SK-N-SH (cell line): ENCODE measurements at regions of chr2 and their contacts with region 1.

Region 1: GRCh38 chr2:131673392-131674173 is 145.9 kb downstream of the CCDC74A start:
- DNase-seq: peak; percentile 78
- H3K4me3 ChIP-seq: peak overlapping the region; percentile 45 to 68
- H3K27ac ChIP-seq: no peak overlapping the region
- H3K4me1 ChIP-seq: peaks cover 0 to 9% of the 10 kb centered on the region in 2 experiments; a peak in 1 of 4 replicates
- H3K27me3 ChIP-seq: no peaks in the 10 kb centered on the region
- CTCF ChIP-seq: peak; percentile 79
- EP300 ChIP-seq: no peak
- RAD21 ChIP-seq: peak; percentile 76

Region 2: GRCh38 chr2:131154071-131154531 is 519.5 kb before region 1 on chr2:
- CTCF ChIA-PET with region 1: interaction called, 30 read pairs
- POLR2A ChIA-PET with region 1: no interaction called
- DNase-seq: peak; percentile 92
- H3K4me3 ChIP-seq: no peak overlapping the region; a peak in 1 of 4 replicates
- H3K27ac ChIP-seq: no peak overlapping the region
- H3K4me1 ChIP-seq: no peaks in the 10 kb centered on the region; a peak in 1 of 4 replicates
- H3K27me3 ChIP-seq: no peaks in the 10 kb centered on the region
- CTCF ChIP-seq: peak; percentile 87
- EP300 ChIP-seq: no peak
- RAD21 ChIP-seq: peak; percentile 97

Region 3: DNA sequence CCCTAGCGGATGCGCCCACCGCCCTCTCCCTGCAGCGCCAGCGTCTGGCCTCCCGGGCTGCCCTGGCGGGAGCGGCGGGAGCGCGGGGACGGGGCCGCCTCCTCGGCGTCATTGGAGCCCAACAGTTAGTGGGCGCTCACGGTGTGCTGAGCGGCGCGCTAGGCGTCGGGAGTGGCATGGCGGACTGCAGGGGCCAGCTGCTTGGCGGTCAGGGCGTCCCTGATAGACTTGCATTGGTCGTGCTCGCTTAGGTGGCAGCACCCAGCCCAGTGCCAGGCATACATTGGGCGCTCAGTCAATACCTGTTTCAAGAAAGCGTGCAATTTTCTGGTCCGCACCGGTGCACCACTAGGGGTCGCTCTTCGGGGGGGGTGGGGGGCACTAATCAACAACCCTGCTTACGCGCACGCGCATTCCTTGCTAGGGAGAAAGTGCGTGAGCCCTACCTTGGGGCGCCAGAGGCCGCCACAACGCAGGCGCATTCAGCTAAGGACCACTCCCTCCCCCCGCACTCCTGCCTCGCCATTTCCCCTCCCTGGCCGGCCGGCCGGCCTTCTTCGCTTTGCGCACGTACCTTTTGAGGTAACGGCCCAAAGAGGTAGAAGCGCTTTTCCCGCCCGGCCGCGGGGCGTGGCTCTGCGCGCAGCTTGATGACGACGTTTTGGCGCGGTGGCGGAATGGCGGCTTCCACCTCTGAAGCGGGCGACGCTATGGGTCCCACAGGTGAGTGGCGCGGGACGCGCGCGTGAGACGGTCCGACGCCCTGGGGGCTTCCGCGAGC is 181.0 kb before region 1 on chr2:
- CTCF ChIA-PET with region 1: interaction called, 36 read pairs
- POLR2A ChIA-PET with region 1: no interaction called
- DNase-seq: peak; percentile 100
- H3K4me3 ChIP-seq: peak overlapping the region; percentile 83 to 91
- H3K27ac ChIP-seq: peak overlapping the region; percentile 74 to 91
- H3K4me1 ChIP-seq: peaks cover 6 to 15% of the 10 kb centered on the region in 2 experiments; a peak in 2 of 4 replicates
- H3K27me3 ChIP-seq: no peaks in the 10 kb centered on the region
- CTCF ChIP-seq: peak; percentile 95
- EP300 ChIP-seq: no peak
- RAD21 ChIP-seq: peak; percentile 11; the same call in 1 of the 2 replicates

Region 4: DNA sequence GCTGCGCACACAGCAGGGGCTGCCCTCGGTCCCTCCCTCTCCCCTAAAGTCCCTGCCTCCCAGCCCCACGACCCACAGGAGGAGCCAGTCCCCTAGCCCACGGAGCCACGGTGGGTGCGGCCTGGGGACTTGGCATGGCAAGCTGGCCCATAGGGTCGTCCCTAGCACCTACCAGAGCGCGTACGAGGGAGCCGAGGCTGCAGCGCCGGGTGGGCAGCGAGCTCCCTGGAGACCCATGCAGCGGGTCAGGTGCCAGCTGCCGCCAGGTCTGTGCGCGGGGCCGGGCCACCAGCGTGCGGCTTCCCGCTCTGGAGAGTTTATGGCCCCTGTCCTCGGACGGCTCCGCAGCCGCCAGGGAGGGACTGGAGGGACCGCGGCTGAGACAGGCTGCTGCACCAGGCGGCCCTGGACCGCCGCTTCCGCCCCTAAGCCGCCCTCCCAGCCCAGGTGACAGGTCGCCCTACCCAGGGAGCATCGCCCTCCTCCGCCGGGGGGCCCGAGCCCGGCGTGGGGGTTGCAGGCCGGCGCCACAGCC is 127.7 kb after region 1 on chr2:
- CTCF ChIA-PET with region 1: interaction called, 44 read pairs
- POLR2A ChIA-PET with region 1: interaction called, 3 read pairs
- DNase-seq: peak; percentile 15
- H3K4me3 ChIP-seq: peak overlapping the region in 1 of 2 experiments; percentile 21; a peak in 2 of 4 replicates
- H3K27ac ChIP-seq: no peak overlapping the region
- H3K4me1 ChIP-seq: no peaks in the 10 kb centered on the region; a peak in 1 of 4 replicates
- H3K27me3 ChIP-seq: no peaks in the 10 kb centered on the region; the same call in 1 of the 2 replicates
- CTCF ChIP-seq: no peak
- EP300 ChIP-seq: no peak
- RAD21 ChIP-seq: no peak